ENCODE measurements at regions of chr6 and their contacts with region 1.

Region 1: DNA sequence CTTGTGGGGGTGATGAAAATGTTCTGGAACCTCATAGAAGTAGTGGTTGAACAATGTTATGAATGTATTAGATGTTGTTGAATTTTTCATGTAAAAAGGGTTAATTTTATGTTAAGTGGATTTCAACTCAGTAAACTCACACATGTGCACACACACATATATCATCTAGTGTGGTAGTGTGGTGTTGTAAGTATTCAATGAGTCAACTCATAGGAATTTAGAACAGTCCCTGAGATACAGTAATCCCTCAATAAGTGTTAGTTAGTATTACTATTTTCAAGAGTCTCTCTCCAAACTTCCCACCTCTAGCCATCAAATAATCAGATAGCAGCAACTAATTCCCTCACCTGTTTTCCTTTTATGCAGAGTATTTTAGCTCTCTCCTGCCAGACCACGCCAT is 563.1 kb upstream of the JARID2 start:
- DNase-seq: no peak
- ATAC-seq: no peak
- H3K4me3 ChIP-seq: no peak overlapping the region
- H3K27ac ChIP-seq: no peak overlapping the region
- H3K4me1 ChIP-seq: no peaks in the 10 kb centered on the region
- H3K27me3 ChIP-seq: no peaks in the 10 kb centered on the region
- CTCF ChIP-seq: no peak

Region 2: DNA sequence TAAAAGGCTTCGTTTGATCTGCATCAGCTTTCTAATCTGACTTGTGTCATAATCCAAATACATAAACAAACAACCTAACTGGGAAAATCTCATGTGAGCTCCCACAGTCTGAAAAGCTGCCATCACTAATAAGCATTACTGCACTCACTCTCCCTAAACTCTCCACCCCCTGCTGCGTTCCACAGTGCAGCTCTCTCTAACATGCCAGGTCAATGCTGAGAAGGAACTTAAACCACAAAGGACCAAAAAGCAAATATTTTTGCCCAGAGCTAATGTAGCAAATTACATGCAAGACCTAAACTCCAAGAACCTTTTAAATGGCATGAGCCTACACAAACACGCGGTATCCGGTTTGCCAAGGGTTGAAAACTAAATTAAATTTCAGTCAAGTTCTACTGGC is 20.8 kb after region 1 on chr6:
- CTCF ChIA-PET with region 1: no interaction called
- POLR2A ChIA-PET with region 1: interaction called, 15 read pairs
- in situ Hi-C with region 1: no loop called
- intact Hi-C with region 1: no loop called
- DNase-seq: no peak
- ATAC-seq: no peak
- H3K4me3 ChIP-seq: no peak overlapping the region
- H3K27ac ChIP-seq: no peak overlapping the region
- H3K4me1 ChIP-seq: no peaks in the 10 kb centered on the region
- H3K27me3 ChIP-seq: no peaks in the 10 kb centered on the region
- CTCF ChIP-seq: no peak

Measured in Panc1 (cell line).